ENCODE measurements at regions of chr6 and their contacts with region 1.

Region 1: DNA sequence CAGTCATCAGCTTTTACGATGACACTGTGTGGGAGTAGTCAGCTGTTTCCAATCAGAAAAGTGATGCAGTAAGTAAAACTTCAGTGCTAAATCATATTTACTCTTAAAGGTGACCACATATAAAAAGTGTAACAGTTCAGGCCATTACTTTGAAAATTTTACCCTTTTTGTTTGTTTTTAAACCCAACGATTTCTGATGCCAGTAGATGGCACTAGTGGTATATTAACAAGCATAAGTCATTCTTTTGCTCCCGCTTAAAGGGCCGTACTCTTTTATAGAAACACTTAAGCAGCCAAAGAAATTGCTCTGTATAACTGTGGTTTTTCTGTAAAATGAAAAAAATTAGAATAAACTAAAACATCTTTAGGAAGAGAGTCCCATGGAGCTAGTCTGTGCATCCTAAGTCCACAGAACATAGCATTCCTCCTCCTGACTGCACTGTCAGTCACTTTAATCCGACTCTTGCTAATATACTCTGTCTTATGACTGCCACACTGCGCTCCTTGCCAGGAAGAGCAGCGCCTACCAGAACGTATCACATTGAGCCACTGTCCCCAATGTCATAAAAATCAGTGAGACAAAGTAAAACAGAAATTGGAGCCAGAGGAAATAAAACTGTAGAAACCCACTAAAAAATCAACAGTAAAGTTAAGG is 25.0 kb downstream of the HEBP2 start:
- DNase-seq: peak; percentile 77
- ATAC-seq: peak; percentile 76
- H3K4me3 ChIP-seq: no peak overlapping the region
- H3K27ac ChIP-seq: no peak overlapping the region
- H3K4me1 ChIP-seq: peaks cover 5% of the 10 kb centered on the region; the same call in 1 of the 2 replicates
- H3K27me3 ChIP-seq: no peaks in the 10 kb centered on the region
- CTCF ChIP-seq: peak; percentile 80
- POLR2A ChIP-seq: no peak
- RAD21 ChIP-seq: peak; percentile 80

Region 2: DNA sequence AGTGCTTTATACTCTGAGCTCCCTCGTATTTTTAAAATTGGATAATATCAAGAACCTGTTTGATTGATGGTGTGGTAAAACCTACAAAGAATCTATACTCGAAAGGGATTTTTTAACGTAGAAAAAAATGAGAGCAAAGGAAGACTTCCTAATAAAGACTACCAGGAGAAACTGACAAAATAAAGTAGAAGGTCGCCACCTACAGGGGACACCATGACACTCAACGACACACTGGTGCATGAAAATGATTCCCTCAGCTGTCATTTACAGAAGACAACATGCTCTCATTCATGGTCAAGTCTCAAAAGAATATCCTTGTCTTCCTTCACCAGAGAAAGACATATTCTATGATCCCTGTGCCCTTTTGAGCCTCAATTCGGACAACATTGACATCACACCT is 80.3 kb after region 1 on chr6:
- CTCF ChIA-PET with region 1: interaction called, 8 read pairs
- POLR2A ChIA-PET with region 1: no interaction called
- dilution Hi-C with region 1: no loop called
- in situ Hi-C with region 1: loop called (anchors 5 kb)
- intact Hi-C with region 1: loop called (anchors 1 kb)
- DNase-seq: peak; percentile 52
- ATAC-seq: 0 out of 2 replicates have a peak, but pooled peaks have one; percentile 46
- H3K4me3 ChIP-seq: no peak overlapping the region
- H3K27ac ChIP-seq: no peak overlapping the region
- H3K4me1 ChIP-seq: no peaks in the 10 kb centered on the region
- H3K27me3 ChIP-seq: no peaks in the 10 kb centered on the region
- CTCF ChIP-seq: peak; percentile 55
- POLR2A ChIP-seq: no peak
- RAD21 ChIP-seq: peak; percentile 65

Region 3: DNA sequence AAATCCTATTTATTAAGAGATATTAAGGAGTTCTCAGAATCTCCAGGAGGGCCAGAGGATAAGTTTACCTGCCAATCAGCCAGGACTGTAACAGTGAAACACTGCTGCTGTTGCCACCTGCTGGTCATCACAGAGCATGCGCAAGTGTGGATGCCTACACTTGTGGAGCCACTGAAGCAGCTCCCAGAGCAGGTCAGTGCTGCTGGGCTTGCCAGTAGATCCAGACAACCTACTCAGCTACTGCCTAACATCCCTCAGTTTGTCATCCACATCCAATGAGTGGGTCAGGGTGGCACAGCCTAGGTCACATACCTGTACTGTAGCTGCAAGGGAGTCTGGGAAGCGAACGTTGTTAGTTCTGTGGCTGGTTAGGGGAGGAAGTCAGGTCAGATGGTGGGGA is 88.6 kb after region 1 on chr6:
- CTCF ChIA-PET with region 1: interaction called, 3 read pairs
- POLR2A ChIA-PET with region 1: no interaction called
- dilution Hi-C with region 1: no loop called
- in situ Hi-C with region 1: loop called (anchors 5 kb)
- intact Hi-C with region 1: no loop called
- DNase-seq: peak; percentile 43
- ATAC-seq: peak; percentile 76
- H3K4me3 ChIP-seq: no peak overlapping the region
- H3K27ac ChIP-seq: no peak overlapping the region
- H3K4me1 ChIP-seq: no peaks in the 10 kb centered on the region
- H3K27me3 ChIP-seq: no peaks in the 10 kb centered on the region
- CTCF ChIP-seq: peak; percentile 55
- POLR2A ChIP-seq: no peak
- RAD21 ChIP-seq: peak; percentile 53

Region 4: GRCh38 chr6:138692058-138692977 is 263.2 kb after region 1 on chr6:
- CTCF ChIA-PET with region 1: no interaction called
- POLR2A ChIA-PET with region 1: no interaction called
- dilution Hi-C with region 1: no loop called
- in situ Hi-C with region 1: no loop called
- intact Hi-C with region 1: loop called (anchors 10 kb)
- DNase-seq: peak; percentile 50
- ATAC-seq: peak; percentile 79
- H3K4me3 ChIP-seq: peak overlapping the region; percentile 88
- H3K27ac ChIP-seq: peak overlapping the region; percentile 65
- H3K4me1 ChIP-seq: no peaks in the 10 kb centered on the region
- H3K27me3 ChIP-seq: no peaks in the 10 kb centered on the region
- CTCF ChIP-seq: peak; percentile 75
- POLR2A ChIP-seq: no peak
- RAD21 ChIP-seq: peak; percentile 40

Region 5: DNA sequence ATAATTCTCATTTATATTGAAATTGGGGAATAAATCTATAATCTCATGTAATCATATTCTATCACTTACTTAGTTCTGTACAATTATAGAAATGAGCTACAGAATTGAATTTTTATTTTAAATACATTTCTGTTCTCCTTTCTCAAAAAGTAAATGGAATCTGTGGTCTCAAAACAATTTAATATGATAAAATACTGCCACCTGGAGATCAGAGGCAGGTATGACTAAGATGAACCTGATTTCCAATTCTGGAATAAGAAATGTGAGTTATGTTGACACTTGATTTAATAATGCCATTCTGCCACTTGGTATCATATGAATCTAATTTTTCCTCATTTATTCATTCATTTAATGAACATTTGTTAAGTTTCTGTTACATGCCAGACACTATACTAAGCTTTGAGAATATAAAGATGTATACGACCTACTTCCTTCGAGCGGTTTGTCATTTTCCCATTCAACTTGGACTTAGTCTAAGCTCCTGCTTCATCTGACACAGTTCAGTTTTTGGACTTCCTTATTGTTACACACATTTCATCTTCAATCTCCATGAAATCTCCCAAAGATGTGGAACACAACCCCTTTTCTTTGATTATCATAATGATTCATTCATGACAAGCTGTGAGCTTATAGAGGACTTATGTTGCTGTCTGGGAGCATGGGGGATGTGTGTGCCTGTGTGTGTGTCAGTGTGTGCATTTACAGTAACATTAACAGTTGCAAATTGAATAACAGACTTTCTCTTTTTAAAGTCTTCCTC is 337.0 kb after region 1 on chr6:
- CTCF ChIA-PET with region 1: no interaction called
- POLR2A ChIA-PET with region 1: no interaction called
- dilution Hi-C with region 1: no loop called
- in situ Hi-C with region 1: loop called (anchors 5 kb)
- intact Hi-C with region 1: loop called (anchors 2 kb)
- DNase-seq: peak; percentile 56
- ATAC-seq: peak; percentile 56; the same call in 1 of the 2 replicates
- H3K4me3 ChIP-seq: no peak overlapping the region
- H3K27ac ChIP-seq: no peak overlapping the region
- H3K4me1 ChIP-seq: no peaks in the 10 kb centered on the region
- H3K27me3 ChIP-seq: no peaks in the 10 kb centered on the region
- CTCF ChIP-seq: peak; percentile 71
- POLR2A ChIP-seq: no peak
- RAD21 ChIP-seq: peak; percentile 71